Mammary epithelial cell (primary cell): ENCODE measurements at regions of chr7 and their contacts with region 1.

Region 1: GRCh38 chr7:12686894-12687717 is at the start of gene ARL4A:
- DNase-seq: peak; percentile 98
- H3K4me3 ChIP-seq: peak within 1 kb of the TSS; percentile 82 to 95 (median 89)
- H3K27ac ChIP-seq: peak within 1 kb of the TSS; percentile 84
- H3K4me1 ChIP-seq: peaks cover 6% of the 10 kb centered on the region
- H3K27me3 ChIP-seq: no peaks in the 10 kb centered on the region
- CTCF ChIP-seq: peak; percentile 19 to 63
- total RNA-seq, gene ARL4A: 24.9 to 57.3 TPM

Region 2: GRCh38 chr7:12731214-12731656 is 44.1 kb after region 1 on chr7:
- CTCF ChIA-PET with region 1: no interaction called
- dilution Hi-C with region 1: no loop called
- in situ Hi-C with region 1: no loop called
- intact Hi-C with region 1: loop called (anchors 1 kb)
- DNase-seq: peak; percentile 69
- H3K4me3 ChIP-seq: no peak overlapping the region
- H3K27ac ChIP-seq: peak overlapping the region; percentile 26
- H3K4me1 ChIP-seq: peaks cover 13% of the 10 kb centered on the region
- H3K27me3 ChIP-seq: no peaks in the 10 kb centered on the region
- CTCF ChIP-seq: peak; percentile 9 to 62

Region 3: DNA sequence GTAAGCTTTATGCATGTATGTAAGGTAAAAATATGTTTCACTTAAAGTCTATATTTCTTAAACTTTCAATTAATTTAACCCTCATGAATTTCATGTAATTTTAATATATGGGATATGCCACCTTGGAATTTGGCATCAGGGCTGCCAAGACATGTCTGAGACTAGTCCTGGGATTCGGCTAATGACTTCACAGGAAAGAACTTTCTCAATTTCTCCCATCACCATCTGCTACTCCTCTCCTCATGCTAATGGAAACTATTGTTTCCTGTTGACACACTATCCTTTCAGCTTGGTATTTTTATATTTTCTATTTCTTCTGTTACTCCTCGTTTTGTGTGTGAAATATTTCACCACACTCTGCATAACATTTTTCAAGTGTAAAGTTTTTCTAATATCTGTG is 206.2 kb after region 1 on chr7:
- CTCF ChIA-PET with region 1: no interaction called
- dilution Hi-C with region 1: no loop called
- in situ Hi-C with region 1: no loop called
- intact Hi-C with region 1: loop called (anchors 5 kb)
- DNase-seq: no peak
- H3K4me3 ChIP-seq: no peak overlapping the region
- H3K27ac ChIP-seq: peak overlapping the region; percentile 22
- H3K4me1 ChIP-seq: peaks cover 6% of the 10 kb centered on the region
- H3K27me3 ChIP-seq: no peaks in the 10 kb centered on the region
- CTCF ChIP-seq: no peak

Region 4: GRCh38 chr7:12929476-12930140 is 242.5 kb after region 1 on chr7:
- CTCF ChIA-PET with region 1: no interaction called
- dilution Hi-C with region 1: no loop called
- in situ Hi-C with region 1: loop called in 1 of 2 experiments (anchors 10 kb)
- intact Hi-C with region 1: loop called (anchors 2 kb)
- DNase-seq: no peak
- H3K4me3 ChIP-seq: no peak overlapping the region
- H3K27ac ChIP-seq: no peak overlapping the region
- H3K4me1 ChIP-seq: peaks cover 3% of the 10 kb centered on the region
- H3K27me3 ChIP-seq: no peaks in the 10 kb centered on the region
- CTCF ChIP-seq: no peak

Region 5: GRCh38 chr7:13117103-13117502 is 430.0 kb after region 1 on chr7:
- CTCF ChIA-PET with region 1: interaction called, 10 read pairs
- dilution Hi-C with region 1: no loop called
- in situ Hi-C with region 1: loop called (anchors 10 to 25 kb)
- intact Hi-C with region 1: loop called (anchors 1 kb)
- DNase-seq: no peak
- H3K4me3 ChIP-seq: no peak overlapping the region
- H3K27ac ChIP-seq: no peak overlapping the region
- H3K4me1 ChIP-seq: peaks cover 7% of the 10 kb centered on the region
- H3K27me3 ChIP-seq: no peaks in the 10 kb centered on the region
- CTCF ChIP-seq: peak; percentile 42 to 63

Region 6: DNA sequence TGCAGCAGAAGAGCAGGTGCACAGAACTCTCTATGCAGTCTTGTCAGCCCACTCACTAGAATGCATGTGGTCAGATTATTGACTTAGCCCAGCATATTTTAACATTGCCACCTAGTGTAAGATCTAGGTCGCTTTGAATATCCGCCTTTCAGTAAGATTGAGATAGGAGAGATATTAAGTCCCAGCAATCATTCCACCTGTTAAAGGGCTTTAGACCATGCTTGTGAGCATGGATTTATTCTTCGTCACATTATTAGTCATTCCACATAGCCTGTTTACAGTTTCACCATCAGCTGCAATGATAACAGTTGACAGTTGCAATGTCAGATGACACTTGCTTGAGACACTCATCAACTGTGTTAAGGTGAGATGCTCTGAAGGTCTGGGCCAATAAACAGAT is 492.0 kb after region 1 on chr7:
- CTCF ChIA-PET with region 1: no interaction called
- dilution Hi-C with region 1: no loop called
- in situ Hi-C with region 1: no loop called
- intact Hi-C with region 1: loop called (anchors 5 kb)
- DNase-seq: no peak
- H3K4me3 ChIP-seq: no peak overlapping the region
- H3K27ac ChIP-seq: no peak overlapping the region
- H3K4me1 ChIP-seq: no peaks in the 10 kb centered on the region
- H3K27me3 ChIP-seq: peaks cover 4% of the 10 kb centered on the region
- CTCF ChIP-seq: peak in 1 of 2 donors; percentile 19